PC-3 (cell line): ENCODE measurements at regions of chr18 and their contacts with region 1.

Region 1: GRCh38 chr18:9614401-9615279 is at the start of gene PPP4R1:
- DNase-seq: peak; percentile 72
- ATAC-seq: peak; percentile 42
- H3K4me3 ChIP-seq: peak within 1 kb of the TSS; percentile 78
- H3K27ac ChIP-seq: peak within 1 kb of the TSS; percentile 95
- H3K4me1 ChIP-seq: peaks cover 68% of the 10 kb centered on the region
- H3K27me3 ChIP-seq: no peaks in the 10 kb centered on the region
- CTCF ChIP-seq: no peak
- total RNA-seq, gene PPP4R1: 154 and 185 TPM in 2 replicates

Region 2: GRCh38 chr18:9631814-9632496 is 17.3 kb after region 1 on chr18:
- CTCF ChIA-PET with region 1: no interaction called
- POLR2A ChIA-PET with region 1: interaction called, 6 read pairs
- intact Hi-C with region 1: loop called (anchors 2 kb)
- DNase-seq: peak; percentile 97
- ATAC-seq: peak; percentile 100
- H3K4me3 ChIP-seq: peak overlapping the region; percentile 12; the same call in 1 of the 2 replicates
- H3K27ac ChIP-seq: peak overlapping the region; percentile 95
- H3K4me1 ChIP-seq: peaks cover 32% of the 10 kb centered on the region
- H3K27me3 ChIP-seq: no peaks in the 10 kb centered on the region
- CTCF ChIP-seq: no peak

Region 3: GRCh38 chr18:9661564-9661963 is 46.9 kb after region 1 on chr18:
- CTCF ChIA-PET with region 1: interaction called, 13 read pairs
- POLR2A ChIA-PET with region 1: interaction called, 4 read pairs
- intact Hi-C with region 1: loop called (anchors 1 kb)
- DNase-seq: peak; percentile 56
- ATAC-seq: peak; percentile 17; the same call in 1 of the 2 replicates
- H3K4me3 ChIP-seq: no peak overlapping the region
- H3K27ac ChIP-seq: no peak overlapping the region
- H3K4me1 ChIP-seq: peaks cover 25% of the 10 kb centered on the region
- H3K27me3 ChIP-seq: no peaks in the 10 kb centered on the region
- CTCF ChIP-seq: peak; percentile 68

Region 4: DNA sequence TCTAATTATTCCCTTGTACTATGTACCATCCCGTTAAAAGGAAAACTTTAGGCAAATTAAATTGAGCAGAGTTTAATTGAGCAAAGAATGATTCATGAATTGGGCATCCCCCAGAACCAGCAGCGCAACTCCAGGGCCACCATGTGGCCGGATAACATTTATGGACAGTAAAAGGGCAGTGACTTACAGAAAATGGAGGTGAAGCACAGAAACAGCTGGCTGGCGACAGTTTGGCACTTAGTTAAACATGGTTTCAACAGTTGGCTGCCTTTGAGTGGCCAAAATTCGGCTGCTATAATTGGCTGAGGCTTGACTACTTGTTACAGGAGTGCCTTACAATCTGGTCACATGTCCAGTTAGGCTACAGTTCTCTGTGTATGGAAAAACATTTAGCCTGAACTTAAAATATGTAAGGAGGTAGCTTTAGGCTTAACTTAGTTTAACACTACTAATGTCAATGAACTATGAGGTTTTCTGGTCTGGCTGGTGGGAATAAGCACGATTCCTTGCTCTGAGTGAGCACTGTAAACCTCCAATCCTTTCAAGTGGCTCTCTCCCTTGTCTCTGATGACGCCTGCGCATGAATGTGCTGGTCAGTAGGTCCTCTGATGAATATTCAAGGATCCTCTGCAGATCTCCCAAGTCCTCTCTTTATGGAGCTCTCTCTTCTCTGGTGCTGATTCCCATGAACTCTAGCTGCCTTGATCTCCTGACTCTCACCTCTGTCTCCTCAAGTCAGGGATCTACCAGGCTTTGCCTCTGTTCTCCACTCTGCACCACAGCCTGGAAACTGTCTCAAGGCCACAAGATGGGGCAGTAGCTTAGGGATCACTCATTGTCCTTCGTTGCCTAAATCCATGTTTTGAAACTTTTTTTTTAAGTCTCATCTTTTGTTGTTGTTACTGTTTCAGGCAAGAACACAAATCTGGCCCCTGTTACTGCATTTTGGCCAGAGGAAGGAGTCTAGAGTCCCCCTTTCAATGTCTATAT is 69.1 kb after region 1 on chr18:
- CTCF ChIA-PET with region 1: interaction called, 17 read pairs
- POLR2A ChIA-PET with region 1: interaction called, 3 read pairs
- intact Hi-C with region 1: loop called (anchors 1 kb)
- DNase-seq: peak; percentile 89
- ATAC-seq: peak; percentile 92
- H3K4me3 ChIP-seq: peak overlapping the region; percentile 26
- H3K27ac ChIP-seq: peak overlapping the region; percentile 64
- H3K4me1 ChIP-seq: peaks cover 22% of the 10 kb centered on the region
- H3K27me3 ChIP-seq: no peaks in the 10 kb centered on the region
- CTCF ChIP-seq: peak; percentile 81